ENCODE measurements at regions of chr4 and their contacts with region 1.

Region 1: DNA sequence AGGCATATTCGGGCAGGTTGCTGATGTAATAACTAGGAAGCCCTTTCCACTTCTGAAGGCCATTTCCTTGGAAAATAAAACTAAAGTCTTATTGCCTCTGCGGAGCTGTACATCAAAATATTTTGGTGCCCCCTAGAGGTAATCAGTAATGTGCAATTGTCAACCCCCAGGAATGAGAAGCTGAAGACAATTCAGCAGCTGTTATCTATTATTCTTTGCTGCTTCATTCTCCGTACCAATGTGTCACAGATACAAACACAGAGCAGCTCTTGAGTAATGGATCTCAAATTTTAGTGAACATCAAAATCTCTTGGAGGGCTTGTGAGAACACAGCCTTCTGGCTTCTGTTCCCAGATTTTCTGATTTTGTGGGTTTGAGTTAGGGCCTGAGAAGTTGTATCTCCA is 3.5 kb upstream of the SLIT2 start:
- DNase-seq: peak; percentile 55
- H3K4me3 ChIP-seq: peak overlapping the region in 1 of 2 experiments; percentile 14; a peak in 1 of 4 replicates
- H3K27ac ChIP-seq: peak overlapping the region; percentile 62 to 78; a peak in 3 of 4 replicates
- H3K4me1 ChIP-seq: peaks cover 8 to 15% of the 10 kb centered on the region in 2 experiments; a peak in 3 of 4 replicates
- H3K27me3 ChIP-seq: no peaks in the 10 kb centered on the region
- CTCF ChIP-seq: peak; percentile 84
- EP300 ChIP-seq: peak; percentile 24 to 55; a peak in 2 of 4 replicates
- RAD21 ChIP-seq: peak; percentile 92

Region 2: DNA sequence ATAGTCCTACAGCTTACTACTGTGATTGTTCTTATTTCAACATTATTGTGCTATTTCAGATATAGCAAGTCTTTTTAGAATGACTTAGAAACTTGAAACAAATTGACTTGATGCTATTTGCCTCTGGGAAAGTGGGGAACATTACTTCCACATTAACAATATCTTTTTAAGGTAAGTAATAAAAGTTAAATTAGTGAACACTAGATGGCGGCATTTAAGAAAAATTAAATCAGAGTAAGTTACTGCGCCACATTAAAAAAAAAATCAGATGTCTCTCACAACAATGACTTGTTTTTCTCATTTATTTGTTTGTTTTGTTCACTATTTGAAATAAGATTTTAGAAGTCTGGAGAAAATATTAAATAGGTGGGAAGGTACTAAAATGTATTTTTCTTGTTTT is 1023.3 kb before region 1 on chr4:
- CTCF ChIA-PET with region 1: interaction called, 24 read pairs
- POLR2A ChIA-PET with region 1: no interaction called
- DNase-seq: peak; percentile 15
- H3K4me3 ChIP-seq: no peak overlapping the region; a peak in 1 of 4 replicates
- H3K27ac ChIP-seq: no peak overlapping the region
- H3K4me1 ChIP-seq: no peaks in the 10 kb centered on the region
- H3K27me3 ChIP-seq: no peaks in the 10 kb centered on the region
- CTCF ChIP-seq: peak; percentile 68
- EP300 ChIP-seq: no peak
- RAD21 ChIP-seq: peak; percentile 66

Region 3: DNA sequence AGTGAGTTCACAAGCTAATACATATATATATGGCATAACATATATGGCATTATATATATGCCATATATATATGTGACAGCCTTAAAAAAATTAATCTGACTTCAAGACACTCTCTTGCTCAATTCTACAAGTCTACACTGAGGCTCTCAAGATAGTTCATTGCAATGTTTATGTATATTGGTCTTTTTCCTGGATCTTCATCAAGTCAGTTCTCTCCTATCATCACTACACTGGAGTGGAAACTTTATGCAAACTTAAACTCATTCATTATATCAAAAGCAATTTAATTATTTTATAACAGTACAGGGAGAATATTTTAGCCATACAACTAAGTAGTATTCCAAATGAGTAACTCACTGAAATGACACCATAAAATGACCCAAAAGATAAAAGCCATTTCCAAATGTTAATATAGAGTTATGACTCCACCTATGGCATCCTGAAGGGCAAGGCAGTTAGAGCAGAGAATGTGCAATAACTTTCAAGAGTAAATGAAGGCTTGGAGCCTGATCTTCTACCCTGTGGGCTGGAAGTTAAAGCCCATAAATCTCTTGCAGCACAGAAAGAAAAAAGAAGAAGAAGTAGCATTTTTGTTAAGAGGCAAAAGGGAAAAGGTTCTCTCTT is 172.8 kb before region 1 on chr4:
- CTCF ChIA-PET with region 1: no interaction called
- POLR2A ChIA-PET with region 1: no interaction called
- DNase-seq: no peak
- H3K4me3 ChIP-seq: no peak overlapping the region
- H3K27ac ChIP-seq: no peak overlapping the region
- H3K4me1 ChIP-seq: no peaks in the 10 kb centered on the region
- H3K27me3 ChIP-seq: no peaks in the 10 kb centered on the region
- CTCF ChIP-seq: peak; percentile 30
- EP300 ChIP-seq: no peak
- RAD21 ChIP-seq: peak; percentile 50

Region 4: GRCh38 chr4:20237894-20238537 is 10.1 kb before region 1 on chr4:
- CTCF ChIA-PET with region 1: interaction called, 16 read pairs
- POLR2A ChIA-PET with region 1: no interaction called
- DNase-seq: no peak
- H3K4me3 ChIP-seq: no peak overlapping the region
- H3K27ac ChIP-seq: no peak overlapping the region
- H3K4me1 ChIP-seq: no peaks in the 10 kb centered on the region
- H3K27me3 ChIP-seq: no peaks in the 10 kb centered on the region
- CTCF ChIP-seq: no peak
- EP300 ChIP-seq: no peak
- RAD21 ChIP-seq: no peak

Region 5: DNA sequence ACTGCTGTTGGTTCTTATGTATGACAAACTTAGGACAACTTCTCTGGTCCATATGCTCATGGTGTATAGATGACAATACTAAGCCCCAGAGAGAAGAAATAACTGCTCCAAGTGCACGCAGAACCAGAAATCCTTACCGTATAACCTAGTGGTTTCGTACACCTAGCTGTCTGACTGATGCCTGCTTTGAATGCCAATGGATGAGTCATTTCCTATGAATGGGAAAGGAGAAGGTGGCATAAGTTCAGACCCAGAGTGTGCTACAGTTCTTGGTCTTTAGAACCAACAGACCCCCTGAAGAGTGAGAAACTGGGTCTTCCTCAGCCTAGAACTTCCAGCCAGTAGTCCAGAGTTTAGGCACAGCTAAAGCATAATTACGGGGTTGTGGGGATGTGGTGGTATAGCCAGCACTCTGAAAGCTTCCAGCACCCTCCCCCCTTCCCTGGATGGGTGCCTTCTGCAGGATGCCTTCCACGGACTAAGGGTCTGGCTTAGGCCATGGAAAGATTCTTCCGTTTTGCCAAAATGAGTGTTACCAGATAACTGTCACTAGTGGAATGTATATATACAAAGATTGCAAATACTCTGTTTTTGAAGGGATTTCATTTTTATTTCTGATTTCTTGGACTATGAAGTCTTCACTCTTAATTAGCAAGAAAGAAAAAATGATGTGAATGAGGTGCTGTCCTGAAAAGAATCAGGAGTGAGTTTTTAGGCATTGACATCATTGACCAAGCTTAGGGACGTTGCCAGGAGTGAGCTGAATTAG is 367.5 kb after region 1 on chr4:
- CTCF ChIA-PET with region 1: no interaction called
- POLR2A ChIA-PET with region 1: no interaction called
- DNase-seq: no peak
- H3K4me3 ChIP-seq: no peak overlapping the region
- H3K27ac ChIP-seq: peak overlapping the region in 1 of 2 experiments; percentile 16; a peak in 2 of 4 replicates
- H3K4me1 ChIP-seq: peaks cover 4 to 8% of the 10 kb centered on the region in 2 experiments; a peak in 3 of 4 replicates
- H3K27me3 ChIP-seq: no peaks in the 10 kb centered on the region
- CTCF ChIP-seq: no peak
- EP300 ChIP-seq: no peak
- RAD21 ChIP-seq: no peak

Measured in SK-N-SH (cell line).